HCT116 (cell line): ENCODE measurements at regions of chrX and their contacts with region 1.

Region 1: GRCh38 chrX:100424012-100424411 is 13.9 kb upstream of the PCDH19 start:
- DNase-seq: no peak
- ATAC-seq: peak; percentile 77
- H3K4me3 ChIP-seq: no peak overlapping the region
- H3K27ac ChIP-seq: no peak overlapping the region
- H3K4me1 ChIP-seq: no peaks in the 10 kb centered on the region
- H3K27me3 ChIP-seq: no peaks in the 10 kb centered on the region
- CTCF ChIP-seq: peak; percentile 8 to 33 (median 23); a peak in 2 of 6 replicates
- POLR2A ChIP-seq: no peak
- RAD21 ChIP-seq: peak; percentile 42

Region 2: GRCh38 chrX:99371976-99372595 is 1051.9 kb before region 1 on chrX:
- CTCF ChIA-PET with region 1: no interaction called
- POLR2A ChIA-PET with region 1: no interaction called
- RAD21 ChIA-PET with region 1: no interaction called
- intact Hi-C with region 1: no loop called
- DNase-seq: no peak
- ATAC-seq: no peak
- H3K4me3 ChIP-seq: no peak overlapping the region
- H3K27ac ChIP-seq: no peak overlapping the region
- H3K4me1 ChIP-seq: no peaks in the 10 kb centered on the region
- H3K27me3 ChIP-seq: no peaks in the 10 kb centered on the region
- CTCF ChIP-seq: no peak
- POLR2A ChIP-seq: no peak
- RAD21 ChIP-seq: no peak

Region 3: DNA sequence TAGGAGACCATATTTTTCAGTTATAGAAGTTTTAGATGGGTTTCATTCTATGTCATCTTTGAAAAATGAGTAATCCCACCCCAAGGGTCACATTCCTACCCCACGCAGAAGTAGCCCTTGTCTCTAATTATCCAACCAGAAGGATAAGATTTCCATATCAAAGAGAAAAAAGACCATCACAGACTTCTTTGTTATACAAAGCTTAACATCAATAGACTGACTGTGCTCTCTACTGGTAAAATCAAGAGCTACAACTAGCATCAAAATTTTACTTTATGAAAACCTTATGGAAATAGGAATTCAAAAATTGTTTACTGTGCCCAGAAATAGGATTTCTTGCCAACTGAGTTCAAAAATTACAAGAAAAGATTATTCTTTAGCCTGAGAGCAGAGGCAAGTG is 185.6 kb after region 1 on chrX:
- CTCF ChIA-PET with region 1: interaction called, 11 read pairs
- POLR2A ChIA-PET with region 1: no interaction called
- RAD21 ChIA-PET with region 1: no interaction called
- intact Hi-C with region 1: no loop called
- DNase-seq: no peak
- ATAC-seq: no peak
- H3K4me3 ChIP-seq: no peak overlapping the region
- H3K27ac ChIP-seq: no peak overlapping the region
- H3K4me1 ChIP-seq: peaks cover 0 to 1% of the 10 kb centered on the region in 2 experiments; a peak in 1 of 4 replicates
- H3K27me3 ChIP-seq: no peaks in the 10 kb centered on the region
- CTCF ChIP-seq: no peak; a peak in 1 of 6 replicates
- POLR2A ChIP-seq: no peak
- RAD21 ChIP-seq: peak; percentile 19; the same call in 1 of the 2 replicates